ENCODE measurements at regions of chr7 and their contacts with region 1.

Region 1: DNA sequence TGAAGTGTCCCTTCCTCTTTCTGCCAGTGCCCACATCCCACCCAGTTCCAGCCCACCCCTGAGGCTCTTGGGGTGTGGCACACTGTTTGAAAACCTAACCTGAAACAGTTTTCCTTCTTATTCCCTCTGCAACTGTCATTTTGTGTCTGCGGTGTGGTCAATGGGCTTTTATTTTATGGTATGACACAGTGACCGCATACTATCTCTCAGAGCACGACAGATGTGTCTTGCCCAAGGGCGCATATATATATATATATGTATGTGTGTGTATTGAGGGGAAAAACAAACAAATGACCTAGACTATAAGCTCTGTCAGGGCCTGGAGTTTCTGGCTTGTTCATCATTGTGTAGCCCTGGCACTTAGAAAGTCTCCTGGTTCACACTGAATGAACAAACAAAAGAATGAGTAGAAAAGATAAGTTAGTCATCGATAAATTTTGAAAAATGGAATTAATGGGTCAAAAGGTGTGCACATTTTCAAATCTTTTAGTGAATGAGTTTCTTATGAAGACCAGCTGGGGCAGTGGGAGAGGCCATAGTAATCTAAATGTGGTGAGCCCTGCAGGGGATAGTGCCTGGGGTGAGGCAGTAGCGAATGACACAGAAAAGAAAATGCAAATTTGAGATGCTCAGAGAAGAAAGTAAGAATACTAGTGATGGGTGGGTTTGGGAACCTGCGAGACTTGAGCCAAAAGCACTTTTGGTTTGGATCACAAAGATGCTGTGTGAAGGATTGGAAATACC is 198.4 kb downstream of the SNX10 start:
- DNase-seq: no peak
- H3K4me3 ChIP-seq: no peak overlapping the region
- H3K27ac ChIP-seq: no peak overlapping the region
- H3K4me1 ChIP-seq: 0 out of 2 replicates have a peak, but pooled peaks cover 6% of the 10 kb centered on the region
- H3K27me3 ChIP-seq: no peaks in the 10 kb centered on the region
- CTCF ChIP-seq: no peak

Region 2: GRCh38 chr7:26429168-26429567 is 60.9 kb before region 1 on chr7:
- CTCF ChIA-PET with region 1: no interaction called
- POLR2A ChIA-PET with region 1: no interaction called
- intact Hi-C with region 1: loop called (anchors 1 kb)
- DNase-seq: peak; percentile 18 to 57
- H3K4me3 ChIP-seq: no peak overlapping the region
- H3K27ac ChIP-seq: no peak overlapping the region
- H3K4me1 ChIP-seq: peaks cover 12% of the 10 kb centered on the region
- H3K27me3 ChIP-seq: no peaks in the 10 kb centered on the region
- CTCF ChIP-seq: no peak

Region 3: DNA sequence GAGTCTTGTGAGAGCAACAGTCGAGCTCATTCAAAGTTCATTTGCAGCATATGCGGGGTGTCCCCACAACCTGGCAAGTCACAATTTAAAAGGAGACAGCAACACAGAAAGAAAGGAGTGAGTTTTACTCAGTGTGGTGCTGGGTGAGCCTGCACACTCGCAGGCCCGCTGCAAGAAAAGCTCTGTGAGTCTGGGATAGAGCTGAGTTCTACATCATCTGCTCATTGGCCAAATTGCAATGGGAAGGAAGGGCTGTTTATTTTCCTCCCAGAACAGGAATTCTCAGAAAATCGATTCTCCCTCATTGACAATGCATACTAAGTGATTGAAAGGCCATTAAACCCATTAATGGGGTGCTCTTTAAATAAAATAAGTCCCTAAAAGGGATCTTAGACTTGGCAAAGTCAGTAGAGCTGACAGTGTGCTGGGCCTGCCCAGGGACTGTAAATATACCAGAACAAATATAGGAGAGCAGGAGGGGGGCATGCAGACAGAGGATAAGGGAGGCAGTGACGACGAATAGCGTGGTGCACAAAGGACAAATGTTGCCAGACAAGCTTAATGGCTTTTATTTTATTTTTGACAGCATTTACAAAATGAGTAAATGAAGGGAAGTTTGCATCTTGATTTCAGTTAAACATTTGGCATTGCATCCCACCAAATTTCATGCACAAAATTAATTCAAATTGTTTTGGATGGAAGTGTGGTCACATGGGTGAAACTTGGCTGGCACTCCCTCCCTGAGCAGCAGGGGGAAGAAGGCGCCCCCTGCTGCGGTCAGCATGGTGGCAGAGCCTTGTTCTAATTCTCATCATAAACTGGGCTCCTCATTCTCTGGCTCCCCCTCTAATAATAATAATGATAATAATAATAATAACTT is 17.3 kb after region 1 on chr7:
- CTCF ChIA-PET with region 1: no interaction called
- POLR2A ChIA-PET with region 1: no interaction called
- intact Hi-C with region 1: no loop called
- DNase-seq: no peak
- H3K4me3 ChIP-seq: no peak overlapping the region
- H3K27ac ChIP-seq: no peak overlapping the region
- H3K4me1 ChIP-seq: no peaks in the 10 kb centered on the region
- H3K27me3 ChIP-seq: no peaks in the 10 kb centered on the region
- CTCF ChIP-seq: no peak